GM13976 (cell line): ENCODE measurements at regions of chr4 and their contacts with region 1.

Region 1: GRCh38 chr4:141133146-141133998 is at the start of gene RNF150:
- DNase-seq: peak; percentile 73
- CTCF ChIP-seq: peak; percentile 51

Region 2: DNA sequence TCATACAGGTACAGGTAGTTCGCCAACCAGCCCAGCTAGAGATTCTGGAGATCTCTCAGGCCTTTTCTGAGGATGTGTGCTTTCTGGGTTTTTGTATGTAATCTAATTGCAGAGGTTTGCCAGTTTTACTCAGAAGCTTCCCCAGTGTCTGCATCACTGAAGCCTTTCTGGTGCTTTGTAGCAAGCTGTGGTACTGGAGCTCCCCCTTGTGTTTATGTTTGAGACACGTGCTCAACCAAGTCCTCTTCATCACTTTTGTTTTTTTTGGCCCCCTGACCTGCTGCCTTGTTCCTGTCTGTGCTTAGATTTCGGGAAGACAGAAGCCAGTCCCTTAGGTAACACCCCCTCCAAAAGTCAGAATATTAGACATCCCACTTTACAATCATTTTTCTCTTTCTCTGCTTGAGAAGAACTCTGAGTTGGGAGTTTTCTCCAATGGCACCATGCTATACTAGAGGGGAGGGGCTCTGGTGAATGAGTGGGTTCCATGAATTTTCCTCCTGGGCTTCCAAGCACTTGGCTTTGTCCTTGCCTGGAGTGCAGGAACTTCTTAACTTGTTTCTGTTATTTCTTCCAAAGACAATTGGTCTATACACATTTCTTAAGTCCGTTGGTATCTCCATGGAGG is 248.8 kb before region 1 on chr4:
- in situ Hi-C with region 1: loop called (anchors 25 kb)
- DNase-seq: peak; percentile 69
- CTCF ChIP-seq: peak; percentile 59

Region 3: DNA sequence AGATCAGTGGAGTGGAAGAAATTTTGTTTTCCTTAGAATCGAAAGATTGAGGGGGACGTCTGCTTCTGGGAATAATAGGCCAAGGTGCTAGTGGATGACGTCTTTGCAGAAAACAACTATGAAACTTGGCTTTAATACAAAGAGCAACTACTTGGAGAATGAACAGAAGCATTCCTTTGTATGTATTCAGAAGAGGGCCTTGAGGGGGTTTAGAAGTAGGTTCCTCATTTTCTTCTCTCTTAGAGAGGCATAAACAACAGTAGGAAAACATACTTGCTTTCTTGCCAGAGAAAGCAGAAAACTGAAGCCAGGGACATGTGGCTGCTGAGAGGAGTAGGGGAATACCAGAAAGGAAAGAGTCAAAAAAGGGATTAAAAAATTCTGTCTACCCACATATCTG is 255.1 kb after region 1 on chr4:
- in situ Hi-C with region 1: no loop called
- DNase-seq: no peak
- CTCF ChIP-seq: no peak